Breast epithelium (tissue), 4 donors: ENCODE measurements at regions of chrX and their contacts with region 1.

Region 1: GRCh38 chrX:150683536-150684146 is 9.6 kb upstream of the MTMR1 start:
- DNase-seq: no peak
- H3K4me3 ChIP-seq: no peak overlapping the region
- H3K27ac ChIP-seq: no peak overlapping the region
- H3K4me1 ChIP-seq: no peaks in the 10 kb centered on the region
- H3K27me3 ChIP-seq: no peaks in the 10 kb centered on the region
- CTCF ChIP-seq: peak in 2 of 3 donors; percentile 35 to 36
- POLR2A ChIP-seq: no peak

Region 2: DNA sequence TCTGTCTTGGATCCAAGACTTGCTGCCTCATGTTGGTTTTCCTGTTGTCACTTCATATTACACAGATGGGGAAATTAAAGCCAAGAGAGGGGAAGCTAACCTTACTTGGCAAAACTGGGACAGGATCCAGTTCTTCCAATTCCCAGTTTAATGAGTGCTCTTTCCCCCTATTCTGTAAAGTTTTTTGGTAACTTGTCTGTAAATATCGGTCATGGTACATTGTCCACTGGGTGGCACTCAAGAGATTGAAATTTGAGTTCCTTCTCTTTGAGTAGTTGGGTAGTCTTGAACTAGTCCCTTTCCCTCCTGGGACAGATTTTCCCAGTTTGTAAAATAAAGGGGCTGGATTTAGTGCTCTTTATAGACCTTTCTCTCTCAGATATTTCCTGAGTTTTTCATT is 733.0 kb before region 1 on chrX:
- intact Hi-C with region 1: loop called (anchors 10 kb)
- DNase-seq: no peak
- H3K4me3 ChIP-seq: no peak overlapping the region
- H3K27ac ChIP-seq: no peak overlapping the region
- H3K4me1 ChIP-seq: no peaks in the 10 kb centered on the region
- H3K27me3 ChIP-seq: peaks cover 0 to 4% of the 10 kb centered on the region in 2 donors
- CTCF ChIP-seq: peak in 1 of 3 donors; percentile 20
- POLR2A ChIP-seq: no peak